Gastrocnemius medialis (tissue), 4 donors: ENCODE measurements at regions of chr12 and their contacts with region 1.

Region 1: GRCh38 chr12:121773011-121773777 is 20.3 kb downstream of the RHOF start:
- DNase-seq: peak; percentile 50 to 69
- ATAC-seq: peak; percentile 72 to 86
- H3K4me3 ChIP-seq: peak overlapping the region in 2 of 4 donors; percentile 17 to 29
- H3K27ac ChIP-seq: peak overlapping the region; percentile 43 to 75 (median 49)
- H3K4me1 ChIP-seq: peaks cover 11 to 23% of the 10 kb centered on the region in 2 donors
- H3K27me3 ChIP-seq: no peaks in the 10 kb centered on the region
- CTCF ChIP-seq: peak; percentile 89 to 97 (median 96)
- POLR2A ChIP-seq: no peak

Region 2: GRCh38 chr12:121697098-121697698 is 76.0 kb before region 1 on chr12:
- in situ Hi-C with region 1: loop called (anchors 5 to 10 kb)
- intact Hi-C with region 1: loop called (anchors 1 kb)
- DNase-seq: no peak
- ATAC-seq: peak; percentile 14 to 51
- H3K4me3 ChIP-seq: peak overlapping the region in 1 of 4 donors; percentile 4
- H3K27ac ChIP-seq: peak overlapping the region in 1 of 4 donors; percentile 1
- H3K4me1 ChIP-seq: peaks cover 8 to 14% of the 10 kb centered on the region in 2 donors
- H3K27me3 ChIP-seq: no peaks in the 10 kb centered on the region
- CTCF ChIP-seq: peak; percentile 65 to 76 (median 70)
- POLR2A ChIP-seq: no peak

Region 3: GRCh38 chr12:121754849-121755248 is 18.3 kb before region 1 on chr12:
- in situ Hi-C with region 1: no loop called
- intact Hi-C with region 1: loop called (anchors 1 kb)
- DNase-seq: no peak
- ATAC-seq: no peak
- H3K4me3 ChIP-seq: no peak overlapping the region
- H3K27ac ChIP-seq: no peak overlapping the region
- H3K4me1 ChIP-seq: peaks cover 19% of the 10 kb centered on the region in 2 donors
- H3K27me3 ChIP-seq: no peaks in the 10 kb centered on the region
- CTCF ChIP-seq: no peak
- POLR2A ChIP-seq: no peak

Region 4: DNA sequence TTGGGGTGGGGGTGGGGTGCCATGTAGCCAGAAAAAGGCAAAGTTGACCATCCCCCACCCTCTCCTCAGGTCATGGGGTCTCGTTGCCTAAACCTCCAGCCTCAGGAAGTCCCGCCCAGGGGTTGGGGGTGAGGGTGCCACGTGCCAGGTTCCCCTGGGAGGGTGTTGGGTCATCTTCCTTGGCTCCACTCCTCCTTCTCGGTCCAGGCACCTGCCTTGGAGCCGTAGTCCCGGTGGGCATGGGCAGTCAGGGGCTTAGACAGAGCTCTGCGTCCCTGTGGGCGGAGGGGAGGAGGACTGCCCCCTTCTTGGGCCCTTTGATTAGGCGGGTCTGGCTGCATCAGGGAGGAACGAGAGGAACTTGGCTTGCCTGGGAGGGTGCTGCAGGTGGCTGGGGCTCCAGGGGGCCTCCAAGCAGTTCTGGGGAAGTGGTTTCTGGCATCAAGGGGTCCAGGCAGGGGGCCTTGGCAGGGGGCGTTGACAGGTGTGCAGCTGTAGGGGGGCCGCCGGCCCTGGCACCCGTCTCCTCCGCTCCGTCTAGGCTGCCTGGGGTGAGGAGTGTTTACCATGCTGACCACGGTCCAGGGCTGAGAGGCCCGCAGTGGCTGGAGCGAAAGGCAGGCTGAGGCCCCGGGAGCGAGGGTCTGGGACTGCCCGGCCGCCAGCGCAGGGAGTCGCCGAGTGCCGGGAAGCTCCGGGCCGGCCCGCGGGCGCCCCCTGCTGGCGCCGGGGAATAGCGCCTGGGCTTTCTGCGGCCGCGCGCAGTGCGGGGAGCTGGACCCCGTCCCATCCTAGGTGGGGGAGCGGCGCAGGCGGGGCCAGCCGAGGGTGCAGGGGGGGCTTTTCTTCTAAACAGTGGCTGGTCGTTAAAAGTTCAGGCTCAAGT is 38.5 kb after region 1 on chr12:
- in situ Hi-C with region 1: no loop called
- intact Hi-C with region 1: loop called (anchors 1 kb)
- DNase-seq: peak in 1 of 2 donors; percentile 71
- ATAC-seq: peak; percentile 88
- H3K4me3 ChIP-seq: peak overlapping the region; percentile 56 to 71 (median 56)
- H3K27ac ChIP-seq: peak overlapping the region; percentile 69 to 89 (median 81)
- H3K4me1 ChIP-seq: peaks cover 30 to 41% of the 10 kb centered on the region in 2 donors
- H3K27me3 ChIP-seq: no peaks in the 10 kb centered on the region
- CTCF ChIP-seq: peak; percentile 87 to 100 (median 100)
- POLR2A ChIP-seq: no peak

Region 5: DNA sequence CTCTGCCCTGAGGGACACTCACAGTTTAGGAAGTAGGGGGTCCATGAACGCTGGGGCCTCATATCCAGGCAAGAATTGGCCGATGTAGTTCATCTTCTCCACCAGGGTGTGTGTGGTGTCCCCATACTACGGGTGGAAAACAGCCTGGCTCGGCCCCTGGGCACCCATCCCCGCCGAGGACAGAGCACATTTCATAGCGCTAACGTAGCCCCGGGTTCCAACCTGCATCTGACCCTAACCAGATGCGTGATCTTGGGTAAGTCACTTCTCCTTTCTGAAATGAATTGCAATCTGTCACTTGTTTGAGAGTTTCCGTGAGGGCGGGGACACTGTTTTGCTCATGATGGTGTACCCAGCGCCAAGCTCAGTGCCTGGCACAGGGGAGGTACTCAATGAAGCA is 76.5 kb after region 1 on chr12:
- in situ Hi-C with region 1: no loop called
- intact Hi-C with region 1: no loop called
- DNase-seq: no peak
- ATAC-seq: no peak
- H3K4me3 ChIP-seq: no peak overlapping the region
- H3K27ac ChIP-seq: no peak overlapping the region
- H3K4me1 ChIP-seq: no peaks in the 10 kb centered on the region
- H3K27me3 ChIP-seq: no peaks in the 10 kb centered on the region
- CTCF ChIP-seq: no peak
- POLR2A ChIP-seq: no peak